ENCODE measurements at regions of chr12 and their contacts with region 1.

Region 1: DNA sequence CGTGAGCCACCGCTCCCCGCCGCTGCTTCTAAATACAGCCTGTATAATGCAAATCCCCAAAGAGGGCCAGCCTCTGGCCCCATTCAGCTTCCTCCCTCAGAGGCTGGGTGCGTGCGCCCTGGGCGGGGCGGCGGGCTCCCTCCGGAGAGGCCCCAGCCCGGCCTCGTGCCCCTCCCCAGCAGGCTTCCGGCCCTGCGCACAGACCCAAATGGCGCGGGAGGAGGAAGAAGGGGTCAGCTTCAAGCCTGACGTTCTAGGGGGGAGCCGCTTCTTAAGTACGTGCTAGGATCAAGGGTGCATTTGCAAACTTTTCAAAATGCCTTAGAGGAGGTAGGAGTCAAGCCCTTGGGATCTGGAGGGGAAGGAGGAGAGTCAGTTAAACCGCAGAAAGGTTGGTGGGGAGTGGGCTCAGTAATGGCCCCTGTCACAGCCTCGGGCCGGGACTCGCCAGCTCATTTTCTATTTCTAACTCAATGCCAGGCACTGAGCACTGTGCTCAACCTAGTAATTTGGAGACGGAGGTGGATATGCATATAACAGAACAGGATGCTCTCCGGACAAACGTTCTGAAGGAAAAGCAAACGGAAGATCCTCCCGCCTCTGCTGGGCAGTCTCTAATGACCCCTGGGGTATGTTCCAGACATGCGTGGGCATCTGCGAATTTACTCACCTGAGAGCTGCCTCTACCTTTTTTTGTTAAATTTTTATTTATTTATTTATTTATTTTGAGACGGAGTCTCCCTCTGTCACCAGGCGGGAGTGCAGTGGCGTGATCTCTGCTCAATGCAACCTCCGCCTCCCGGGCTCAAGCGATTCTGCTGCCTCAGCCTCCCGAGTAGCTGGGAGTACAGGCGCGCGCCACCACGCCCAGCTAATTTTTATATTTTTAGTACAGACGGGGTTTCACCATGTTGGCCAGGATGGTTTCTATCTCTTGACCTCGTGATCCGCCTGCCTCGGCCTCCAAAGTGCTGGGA is 32.3 kb downstream of the NINJ2 start:
- DNase-seq: peak in 1 of 2 experiments; percentile 69
- H3K4me3 ChIP-seq: peak overlapping the region in 2 of 4 experiments; percentile 26 to 41; a peak in 5 of 8 replicates
- H3K27ac ChIP-seq: no peak overlapping the region
- H3K4me1 ChIP-seq: peaks cover 6 to 14% (median 13%) of the 10 kb centered on the region in 4 experiments
- H3K27me3 ChIP-seq: no peaks in the 10 kb centered on the region
- CTCF ChIP-seq: no peak
- EP300 ChIP-seq: no peak
- POLR2A ChIP-seq: no peak
- RAD21 ChIP-seq: no peak

Region 2: DNA sequence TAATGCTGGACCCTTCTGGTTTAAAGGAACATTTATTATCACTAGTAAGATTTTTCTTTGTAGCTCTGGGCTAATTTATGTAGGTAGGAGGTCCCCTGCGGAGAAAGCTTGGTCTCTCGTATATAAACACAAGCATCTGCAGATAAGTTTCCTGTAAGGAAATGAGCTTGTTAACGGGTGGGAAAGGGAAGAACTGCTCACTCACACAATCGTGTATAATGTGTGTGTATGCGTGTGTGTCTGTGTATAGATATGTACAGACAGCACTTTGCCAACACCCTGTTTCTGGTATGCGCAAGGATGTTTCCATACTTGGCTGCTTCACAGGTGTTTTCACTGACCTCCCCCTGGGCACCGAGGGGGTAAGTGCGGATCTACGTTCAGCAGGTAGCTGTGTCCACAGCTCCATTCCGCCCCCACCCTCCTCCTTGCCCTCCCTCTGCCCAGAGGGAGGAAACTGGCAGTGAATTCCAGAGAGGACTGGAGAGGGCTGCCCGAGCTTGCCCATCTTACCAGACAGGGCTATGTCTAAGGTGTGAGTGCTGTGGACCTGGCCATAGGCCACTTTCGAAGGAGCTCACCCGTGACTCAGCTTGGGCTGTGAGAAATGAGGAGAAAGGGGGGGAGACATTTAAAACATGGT is 32.9 kb before region 1 on chr12:
- CTCF ChIA-PET with region 1: no interaction called
- POLR2A ChIA-PET with region 1: no interaction called
- DNase-seq: no peak
- H3K4me3 ChIP-seq: no peak overlapping the region
- H3K27ac ChIP-seq: 0 out of 2 replicates have a peak overlapping the region, but pooled peaks have one; percentile 22
- H3K4me1 ChIP-seq: peaks cover 0 to 5% (median 1%) of the 10 kb centered on the region in 4 experiments; a peak in 3 of 7 replicates
- H3K27me3 ChIP-seq: no peaks in the 10 kb centered on the region
- CTCF ChIP-seq: no peak
- EP300 ChIP-seq: no peak
- POLR2A ChIP-seq: no peak
- RAD21 ChIP-seq: no peak

Region 3: DNA sequence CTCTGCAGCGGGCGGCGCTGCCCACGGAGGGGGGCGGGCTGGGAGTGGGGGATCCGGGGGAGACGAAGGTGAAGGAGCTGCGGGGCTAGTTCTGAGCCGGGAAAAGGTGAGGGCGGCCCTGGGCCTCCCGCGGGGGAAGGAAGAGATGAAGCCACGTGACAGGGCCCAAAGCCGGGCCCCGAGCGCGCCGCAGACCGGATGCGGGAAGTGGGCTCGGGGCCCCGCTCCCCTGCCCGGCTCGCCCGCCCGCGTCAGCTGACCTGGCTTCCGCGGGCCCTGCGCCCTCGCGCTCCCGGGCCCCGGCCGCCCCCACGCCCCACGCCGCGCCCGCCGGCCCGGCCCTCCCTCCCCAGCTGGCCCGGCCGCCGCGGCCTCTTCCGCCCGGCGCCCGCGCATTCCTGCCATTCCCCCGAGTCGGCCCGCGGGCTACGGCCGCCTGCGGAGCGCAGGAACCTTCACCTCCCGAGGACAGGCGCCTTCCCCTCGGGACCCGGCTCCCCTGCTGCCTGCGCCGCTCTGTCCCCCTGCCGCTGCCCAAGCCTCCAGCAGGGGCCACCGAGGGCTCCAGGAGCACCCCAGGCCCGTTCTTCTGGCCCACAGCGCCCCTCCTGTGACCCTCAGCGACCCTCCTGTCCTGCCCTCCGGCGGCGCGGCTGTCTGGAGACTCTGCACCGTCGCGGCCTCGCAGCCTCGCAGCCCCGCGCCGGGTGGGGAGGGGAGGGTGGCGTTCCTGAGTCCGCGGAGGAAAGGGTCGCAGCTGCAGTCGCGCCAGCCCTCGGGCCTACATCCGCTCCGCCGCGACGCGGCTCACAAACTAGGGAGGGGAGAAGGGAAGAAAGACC is 11.9 kb after region 1 on chr12:
- CTCF ChIA-PET with region 1: interaction called, 3 read pairs
- POLR2A ChIA-PET with region 1: interaction called, 16 read pairs
- DNase-seq: peak in 1 of 2 experiments; percentile 78
- H3K4me3 ChIP-seq: peak overlapping the region; percentile 42 to 63 (median 51)
- H3K27ac ChIP-seq: no peak overlapping the region; the same call in 1 of the 2 replicates
- H3K4me1 ChIP-seq: peaks cover 0 to 8% (median 3%) of the 10 kb centered on the region in 4 experiments; a peak in 4 of 7 replicates
- H3K27me3 ChIP-seq: no peaks in the 10 kb centered on the region; a peak in 5 of 7 replicates
- CTCF ChIP-seq: peak; percentile 38 to 72 (median 49)
- EP300 ChIP-seq: no peak
- POLR2A ChIP-seq: peak; percentile 51 to 71
- RAD21 ChIP-seq: peak; percentile 30 to 56; a peak in 3 of 4 replicates

Region 4: DNA sequence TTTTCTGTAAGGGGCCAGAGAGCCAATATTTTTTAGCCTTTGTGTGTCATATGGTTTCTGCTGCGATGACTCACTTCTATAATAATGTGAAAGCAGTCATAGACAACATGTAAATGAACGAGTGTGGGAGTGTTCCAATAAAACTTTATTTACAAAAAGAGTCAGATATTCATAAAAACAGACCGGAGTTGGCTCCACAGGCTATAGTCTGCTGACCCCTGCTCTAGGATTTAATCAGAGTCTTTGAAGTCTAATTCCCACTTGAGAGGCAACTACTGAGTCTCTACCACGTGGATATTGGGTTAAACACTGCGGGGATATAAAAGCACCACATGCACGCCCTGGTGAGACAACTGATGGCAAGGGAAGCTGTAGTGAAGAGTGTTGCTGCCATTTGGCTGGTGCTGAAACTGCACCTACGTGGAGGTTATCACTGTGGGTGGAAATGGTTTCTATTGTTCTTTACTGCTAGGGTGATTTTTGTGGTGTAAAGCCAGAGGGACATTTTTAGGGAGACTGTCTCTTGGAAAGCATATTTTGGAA is 35.9 kb after region 1 on chr12:
- CTCF ChIA-PET with region 1: no interaction called
- POLR2A ChIA-PET with region 1: no interaction called
- DNase-seq: no peak
- H3K4me3 ChIP-seq: no peak overlapping the region
- H3K27ac ChIP-seq: no peak overlapping the region
- H3K4me1 ChIP-seq: peaks cover 0 to 13% (median 6%) of the 10 kb centered on the region in 4 experiments; a peak in 4 of 7 replicates
- H3K27me3 ChIP-seq: 0 out of 7 replicates have a peak, but pooled peaks cover 0 to 2% (median 0%) of the 10 kb centered on the region in 4 experiments
- CTCF ChIP-seq: no peak
- EP300 ChIP-seq: no peak
- POLR2A ChIP-seq: no peak
- RAD21 ChIP-seq: no peak